ENCODE measurements at regions of chr4 and their contacts with region 1.

Region 1: DNA sequence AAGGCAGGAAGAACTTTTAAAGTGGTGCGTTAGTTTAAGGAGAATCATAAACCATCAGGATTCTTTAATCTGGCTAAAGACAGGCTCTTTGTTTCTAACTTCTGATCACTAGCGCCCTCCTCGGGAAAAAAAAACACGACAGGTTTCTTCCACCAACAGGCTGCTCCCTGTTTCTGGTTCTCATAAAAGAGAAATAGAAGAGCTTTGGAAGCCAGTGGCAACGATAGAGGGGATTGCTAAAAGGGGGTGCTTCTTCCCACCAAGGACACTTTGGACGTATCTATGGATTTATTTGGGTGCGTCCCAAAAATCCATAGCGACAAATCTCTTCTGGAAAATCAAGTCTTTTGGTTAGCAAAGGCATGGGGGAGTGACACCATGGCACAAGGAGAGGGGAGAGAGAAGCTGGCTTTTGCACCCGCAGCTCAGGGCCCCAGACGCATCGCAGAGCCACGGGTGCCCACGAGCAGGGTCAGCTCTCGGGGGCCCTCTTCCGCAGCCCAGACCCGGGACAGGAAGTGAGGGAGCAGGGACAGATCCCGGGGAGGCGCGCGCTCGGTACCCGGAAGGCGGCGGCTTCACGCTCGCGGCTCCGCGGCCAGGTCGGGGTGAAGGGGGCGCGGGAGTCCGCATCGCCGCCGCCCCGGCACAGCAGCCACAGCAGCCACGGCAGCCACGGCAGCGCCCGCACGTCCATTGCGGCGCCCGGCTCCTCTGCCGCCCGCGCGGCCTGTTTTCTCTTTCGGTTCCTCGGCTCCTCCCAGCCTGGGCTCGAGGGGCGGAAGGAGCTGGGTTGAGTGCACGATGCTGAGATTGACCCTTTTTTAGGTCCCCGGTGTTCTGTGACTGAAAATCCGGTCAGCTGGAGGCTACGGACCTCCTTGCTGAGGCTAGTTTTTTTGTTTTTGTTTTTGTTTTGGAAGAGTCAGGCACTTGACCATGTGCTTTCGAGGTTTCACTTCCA is at the start of gene CTSO:
- DNase-seq: peak; percentile 82
- ATAC-seq: peak; percentile 94
- H3K4me3 Mint-ChIP-seq: peak within 1 kb of the TSS; percentile 98
- H3K27ac Mint-ChIP-seq: peak within 1 kb of the TSS; percentile 100
- H3K4me1 Mint-ChIP-seq: peaks cover 7% of the 10 kb centered on the region
- H3K27me3 Mint-ChIP-seq: peaks cover 5% of the 10 kb centered on the region
- total RNA-seq, gene CTSO: 7.6 to 8.3 TPM

Region 2: DNA sequence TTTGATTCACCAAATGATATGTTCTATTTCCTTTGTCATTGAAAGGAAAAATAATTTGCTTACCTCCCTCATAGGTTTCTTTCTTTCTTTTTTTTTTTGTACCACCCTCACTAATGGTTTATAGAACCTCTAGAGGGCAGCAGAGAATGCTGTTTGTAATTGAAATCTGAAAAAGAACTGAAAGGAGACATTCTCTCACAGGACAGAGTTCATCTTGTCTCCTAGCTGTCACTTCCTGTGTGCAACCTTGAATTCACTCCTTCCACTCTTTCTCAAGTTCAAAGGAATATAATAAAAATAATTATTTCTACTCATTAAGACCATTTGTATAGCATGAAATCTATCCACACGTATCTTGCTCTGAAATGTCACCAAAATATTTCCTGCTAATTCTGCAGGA is 143.6 kb before region 1 on chr4:
- POLR2A ChIA-PET with region 1: interaction called, 21 read pairs
- DNase-seq: no peak
- ATAC-seq: peak; percentile 86
- H3K4me3 Mint-ChIP-seq: no peak overlapping the region
- H3K27ac Mint-ChIP-seq: no peak overlapping the region
- H3K4me1 Mint-ChIP-seq: peaks cover 3% of the 10 kb centered on the region
- H3K27me3 Mint-ChIP-seq: no peaks in the 10 kb centered on the region